Endothelial cell of umbilical vein (primary cell): ENCODE measurements at regions of chr9 and their contacts with region 1.

Region 1: GRCh38 chr9:5628530-5629311 is at the start of gene RIC1:
- DNase-seq: peak; percentile 94
- H3K4me3 ChIP-seq: peak within 1 kb of the TSS; percentile 91 to 99 (median 93)
- H3K27ac ChIP-seq: peak within 1 kb of the TSS; percentile 85
- H3K4me1 ChIP-seq: peaks cover 32% of the 10 kb centered on the region
- H3K27me3 ChIP-seq: no peaks in the 10 kb centered on the region
- CTCF ChIP-seq: no peak
- POLR2A ChIP-seq: peak; percentile 98
- total RNA-seq, gene RIC1: 23.5 and 24.8 TPM in 2 replicates

Region 2: GRCh38 chr9:5608298-5609225 is 20.2 kb before region 1 on chr9:
- CTCF ChIA-PET with region 1: interaction called, 9 read pairs
- POLR2A ChIA-PET with region 1: interaction called, 11 read pairs
- dilution Hi-C with region 1: no loop called
- intact Hi-C with region 1: no loop called
- DNase-seq: peak; percentile 67
- H3K4me3 ChIP-seq: peak overlapping the region; percentile 2 to 98 (median 88)
- H3K27ac ChIP-seq: peak overlapping the region; percentile 51
- H3K4me1 ChIP-seq: peaks cover 9% of the 10 kb centered on the region
- H3K27me3 ChIP-seq: no peaks in the 10 kb centered on the region
- CTCF ChIP-seq: no peak
- POLR2A ChIP-seq: no peak

Region 3: GRCh38 chr9:5696884-5697283 is 68.2 kb after region 1 on chr9:
- CTCF ChIA-PET with region 1: no interaction called
- POLR2A ChIA-PET with region 1: no interaction called
- dilution Hi-C with region 1: no loop called
- intact Hi-C with region 1: loop called (anchors 5 kb)
- DNase-seq: no peak
- H3K4me3 ChIP-seq: no peak overlapping the region
- H3K27ac ChIP-seq: no peak overlapping the region
- H3K4me1 ChIP-seq: no peaks in the 10 kb centered on the region
- H3K27me3 ChIP-seq: no peaks in the 10 kb centered on the region
- CTCF ChIP-seq: no peak
- POLR2A ChIP-seq: no peak

Region 4: DNA sequence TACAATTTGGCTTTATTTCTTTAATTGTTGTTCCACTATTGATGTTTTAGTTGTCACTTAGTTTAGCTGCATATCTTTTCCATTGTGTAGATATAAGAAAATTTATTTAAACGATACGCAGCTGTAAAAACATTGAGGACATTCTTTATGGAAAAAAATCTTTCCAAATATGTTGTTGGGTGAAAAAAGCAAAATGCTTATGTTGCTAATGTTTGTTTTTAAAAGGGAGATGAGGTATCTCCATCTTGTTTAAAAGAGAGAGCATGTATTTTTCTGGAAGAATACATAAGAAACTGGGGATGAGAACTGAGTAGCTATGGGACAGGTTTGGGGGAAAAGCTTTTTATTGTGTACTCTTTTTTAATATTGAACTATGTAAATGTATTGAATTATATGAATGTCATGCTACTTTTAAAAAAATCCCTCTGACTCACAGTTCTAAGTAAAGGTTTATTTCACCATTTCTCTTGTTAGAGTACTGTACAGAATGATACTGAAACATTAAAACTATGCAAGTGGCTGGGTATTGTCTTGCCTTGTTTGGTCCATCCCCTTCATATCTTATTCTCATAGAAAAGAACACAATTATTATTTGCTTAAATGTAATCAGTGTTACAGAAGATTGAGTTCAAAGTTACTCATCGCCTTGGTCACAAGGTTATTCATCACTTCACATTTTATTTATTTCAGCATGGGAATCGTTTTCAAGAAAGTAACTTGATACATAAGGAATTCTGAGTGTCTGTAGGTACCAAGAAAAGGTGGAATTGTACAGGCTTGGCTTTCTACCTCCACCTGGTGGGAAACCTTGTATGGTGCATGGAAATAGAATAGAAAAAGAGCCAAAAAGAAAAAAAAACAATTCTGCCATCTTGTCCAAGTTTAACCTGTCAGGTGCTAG is 86.0 kb after region 1 on chr9:
- CTCF ChIA-PET with region 1: interaction called, 3 read pairs
- POLR2A ChIA-PET with region 1: no interaction called
- dilution Hi-C with region 1: no loop called
- intact Hi-C with region 1: loop called (anchors 2 kb)
- DNase-seq: peak; percentile 36
- H3K4me3 ChIP-seq: no peak overlapping the region
- H3K27ac ChIP-seq: no peak overlapping the region
- H3K4me1 ChIP-seq: peaks cover 19% of the 10 kb centered on the region
- H3K27me3 ChIP-seq: no peaks in the 10 kb centered on the region
- CTCF ChIP-seq: peak in 1 of 2 donors; percentile 12
- POLR2A ChIP-seq: no peak